Kidney (tissue), 22 donors: ENCODE measurements at regions of chr11 and their contacts with region 1.

Region 1: DNA sequence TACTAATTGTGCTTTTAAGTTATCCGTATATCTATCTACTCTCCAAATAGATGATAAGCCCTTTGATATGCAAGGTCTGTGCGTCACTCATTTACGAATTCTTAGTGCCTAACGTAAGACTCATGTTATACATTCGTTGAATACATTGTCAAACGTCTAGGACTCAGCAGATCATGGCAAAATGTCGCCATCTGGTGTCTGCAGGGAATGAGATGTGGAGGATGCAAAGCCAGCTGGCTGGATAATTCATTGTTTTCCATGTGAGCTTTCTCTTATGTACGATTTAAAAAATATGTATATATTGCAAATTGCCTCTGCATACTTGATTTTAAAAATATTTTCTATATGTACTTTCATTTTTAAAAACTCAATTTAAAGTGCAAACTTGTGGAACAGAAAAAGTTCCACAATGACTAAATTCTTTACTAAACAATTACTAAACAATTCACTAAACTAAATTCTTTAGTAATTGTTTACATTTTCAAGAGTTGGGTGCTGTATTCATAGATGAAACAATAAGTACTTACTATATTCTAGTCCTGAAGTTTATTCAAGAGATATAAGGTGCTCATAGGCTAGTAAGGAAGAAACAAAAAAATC is 33.8 kb downstream of the ZNF202 start:
- DNase-seq: peak in 4 of 5 donors; percentile 58 to 90 (median 76)
- H3K4me3 ChIP-seq: no peak overlapping the region
- H3K27ac ChIP-seq: no peak overlapping the region
- H3K4me1 ChIP-seq: no peaks in the 10 kb centered on the region
- H3K27me3 ChIP-seq: no peaks in the 10 kb centered on the region
- CTCF ChIP-seq: peak; percentile 78

Region 2: DNA sequence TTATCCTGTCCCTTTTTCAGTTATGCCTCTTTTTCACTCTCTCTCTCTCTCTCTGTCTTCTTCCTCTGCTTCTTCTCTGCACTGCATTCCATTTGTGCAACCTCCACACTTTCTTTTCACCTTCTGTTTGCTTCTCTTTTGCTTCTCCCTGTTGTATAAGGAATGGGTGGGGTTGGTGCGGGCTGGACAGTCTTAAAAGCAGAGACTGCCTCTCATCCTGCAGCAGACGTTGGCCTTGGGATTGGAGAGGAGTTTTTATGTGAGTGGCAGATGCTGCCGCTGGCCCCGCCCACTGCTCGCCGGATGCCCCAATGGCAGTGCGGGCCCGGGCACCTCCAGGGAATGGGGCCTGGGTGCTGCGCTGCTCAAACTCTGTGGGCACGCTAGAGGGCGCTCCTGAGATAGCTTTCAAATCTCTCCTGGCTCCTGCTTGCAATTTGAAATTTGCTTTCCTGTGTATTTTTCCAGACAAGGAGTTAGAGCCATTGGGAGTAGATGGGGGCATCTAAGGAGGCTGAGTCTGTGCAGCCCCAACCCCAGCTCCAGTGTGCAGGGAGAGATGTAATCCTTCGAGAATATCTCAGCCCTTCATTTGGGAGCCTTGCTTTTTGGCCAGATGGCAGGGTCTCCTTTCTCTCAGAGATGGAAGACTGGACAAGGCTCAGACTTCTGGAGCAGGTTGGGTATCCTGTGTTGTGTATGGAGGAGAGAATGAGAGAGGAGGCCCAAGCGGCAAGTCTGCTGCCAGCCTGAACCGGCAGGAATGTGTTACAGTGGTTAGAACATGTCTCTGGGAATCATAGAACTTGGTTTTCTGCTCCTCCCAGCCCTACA is 196.5 kb before region 1 on chr11:
- intact Hi-C with region 1: loop called (anchors 10 kb)
- DNase-seq: peak; percentile 90 to 95 (median 94)
- H3K4me3 ChIP-seq: no peak overlapping the region
- H3K27ac ChIP-seq: no peak overlapping the region
- H3K4me1 ChIP-seq: no peaks in the 10 kb centered on the region
- H3K27me3 ChIP-seq: no peaks in the 10 kb centered on the region
- CTCF ChIP-seq: peak; percentile 80

Region 3: DNA sequence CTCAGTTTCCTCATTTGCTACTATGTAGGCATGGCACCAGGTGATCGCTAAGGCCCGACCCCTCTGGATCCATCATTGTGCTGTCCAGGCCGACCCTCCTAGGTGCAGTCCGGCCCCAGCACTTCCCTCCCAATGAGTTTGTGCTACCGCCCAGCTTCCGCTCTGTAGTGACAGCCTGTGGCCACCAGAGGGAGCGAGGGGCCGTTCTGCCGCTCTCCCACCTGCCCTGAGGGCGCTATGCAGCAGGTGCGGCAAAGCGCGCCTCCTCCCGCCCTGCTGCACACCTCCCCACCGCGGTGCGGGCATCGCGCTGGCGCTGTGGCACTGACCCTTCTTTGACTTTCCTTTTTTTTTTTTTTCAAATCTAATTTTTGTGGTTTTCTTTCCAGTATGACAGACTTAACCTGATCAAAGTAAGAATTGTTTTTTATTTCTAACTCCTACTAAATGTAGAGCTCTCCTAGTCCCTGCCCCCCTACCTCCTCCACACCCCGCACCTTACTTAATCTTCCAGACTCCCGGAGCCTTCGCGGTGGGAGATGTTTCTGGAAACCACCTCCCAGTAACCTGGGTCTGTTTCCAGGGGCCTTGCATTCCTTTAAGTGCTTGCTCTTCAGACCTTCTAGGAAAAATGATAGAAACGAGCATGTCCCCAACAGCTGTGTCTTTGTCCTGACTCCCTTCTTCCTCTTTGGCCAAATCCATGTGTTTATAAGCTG is 127.0 kb before region 1 on chr11:
- intact Hi-C with region 1: loop called (anchors 5 kb)
- DNase-seq: peak in 4 of 5 donors; percentile 79 to 81 (median 80)
- H3K4me3 ChIP-seq: no peak overlapping the region
- H3K27ac ChIP-seq: no peak overlapping the region
- H3K4me1 ChIP-seq: no peaks in the 10 kb centered on the region
- H3K27me3 ChIP-seq: no peaks in the 10 kb centered on the region
- CTCF ChIP-seq: peak; percentile 98

Region 4: DNA sequence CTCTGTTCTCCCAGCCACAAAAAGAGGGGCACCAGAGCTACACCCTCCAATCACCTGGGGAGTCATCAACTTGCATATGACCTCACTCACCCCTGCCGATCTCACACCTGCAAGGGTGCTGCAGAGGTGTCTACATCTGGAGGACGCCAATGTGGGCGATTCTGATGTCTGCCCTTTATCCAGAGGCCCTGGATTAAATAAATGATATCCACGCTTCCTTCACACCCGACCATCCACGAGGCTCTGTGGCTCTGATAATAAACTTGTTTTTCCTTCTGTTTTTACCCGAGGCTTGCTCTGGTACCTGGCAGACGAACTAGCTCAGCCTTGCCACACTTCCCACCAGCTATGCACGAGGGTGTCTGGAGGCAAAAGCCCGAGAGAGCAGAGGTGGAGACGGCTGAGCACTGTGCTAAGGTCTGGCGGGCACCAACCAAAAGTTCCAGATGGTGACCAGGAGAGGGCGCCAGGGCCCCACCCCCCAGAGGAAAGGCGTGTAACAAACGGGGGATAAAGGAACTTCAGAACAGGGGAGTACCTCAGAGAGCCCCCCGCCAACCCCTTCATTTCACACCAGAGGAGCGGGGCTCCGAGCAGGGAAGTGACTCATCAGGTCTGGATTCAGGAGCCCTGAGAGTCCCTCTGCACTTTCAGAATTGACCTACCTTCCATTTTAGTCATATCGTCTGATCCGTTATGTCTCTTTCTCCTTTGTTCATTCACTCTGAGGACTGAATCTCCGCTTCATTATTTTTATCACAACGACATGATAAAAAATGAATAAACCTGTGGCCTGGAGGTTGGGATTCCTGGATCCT is 66.8 kb before region 1 on chr11:
- intact Hi-C with region 1: loop called (anchors 5 kb)
- DNase-seq: peak; percentile 48 to 69 (median 58)
- H3K4me3 ChIP-seq: no peak overlapping the region
- H3K27ac ChIP-seq: no peak overlapping the region
- H3K4me1 ChIP-seq: no peaks in the 10 kb centered on the region
- H3K27me3 ChIP-seq: no peaks in the 10 kb centered on the region
- CTCF ChIP-seq: peak; percentile 53